Activated naive CD4-positive, alpha-beta T cell treated with anti-CD3 and anti-CD28 coated beads for 36 hours (primary cell): ENCODE measurements at regions of chr17 and their contacts with region 1.

Region 1: GRCh38 chr17:69607162-69607834 is 192.8 kb downstream of the MAP2K6 start:
- DNase-seq: peak; percentile 78
- H3K4me3 Mint-ChIP-seq: no peak overlapping the region
- H3K27ac Mint-ChIP-seq: peak overlapping the region; percentile 73
- H3K4me1 Mint-ChIP-seq: peaks cover 14% of the 10 kb centered on the region
- H3K27me3 Mint-ChIP-seq: peaks cover 7% of the 10 kb centered on the region

Region 2: GRCh38 chr17:69574257-69575197 is 32.8 kb before region 1 on chr17:
- CTCF ChIA-PET with region 1: no interaction called
- intact Hi-C with region 1: loop called (anchors 2 kb)
- DNase-seq: no peak
- H3K4me3 Mint-ChIP-seq: no peak overlapping the region
- H3K27ac Mint-ChIP-seq: no peak overlapping the region
- H3K4me1 Mint-ChIP-seq: no peaks in the 10 kb centered on the region
- H3K27me3 Mint-ChIP-seq: peaks cover 5% of the 10 kb centered on the region

Region 3: DNA sequence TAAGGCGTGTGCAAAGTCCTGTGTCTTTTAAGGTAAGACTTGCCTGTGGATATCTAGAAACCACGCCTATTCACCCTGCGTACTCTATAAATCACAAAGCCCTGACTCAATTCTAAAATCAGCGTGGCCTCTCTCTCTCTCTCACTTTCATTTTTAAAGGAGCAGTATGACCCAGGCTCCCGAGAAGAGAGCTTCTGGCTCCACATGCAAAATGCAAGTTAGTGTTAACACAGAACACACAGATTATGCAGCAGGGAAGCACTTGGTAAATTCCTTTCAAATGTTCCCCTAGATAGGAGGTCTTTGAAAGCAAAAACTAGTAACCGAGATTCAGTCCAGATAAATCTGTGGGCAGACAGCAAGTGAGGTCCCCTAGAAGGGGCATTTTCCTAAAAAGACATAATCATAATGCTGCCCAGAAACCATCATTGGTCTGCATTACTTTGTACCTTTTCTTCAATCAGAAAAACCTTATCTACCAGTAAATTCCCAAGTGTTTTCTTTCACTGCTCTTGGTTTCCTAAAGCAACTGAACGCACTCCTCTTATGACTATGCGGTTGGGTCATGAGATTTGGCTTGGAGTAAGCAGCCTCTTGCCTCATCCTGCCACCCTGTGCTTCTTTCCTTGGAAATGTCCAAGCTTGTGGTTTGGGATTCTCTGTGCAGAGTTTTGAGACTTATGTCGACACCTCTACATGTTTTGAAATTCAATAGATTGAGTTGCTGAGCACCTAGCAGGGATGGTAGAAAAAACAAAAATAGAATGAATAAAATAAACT is 530.3 kb after region 1 on chr17:
- CTCF ChIA-PET with region 1: no interaction called
- intact Hi-C with region 1: loop called (anchors 2 kb)
- DNase-seq: peak; percentile 59
- H3K4me3 Mint-ChIP-seq: no peak overlapping the region
- H3K27ac Mint-ChIP-seq: no peak overlapping the region
- H3K4me1 Mint-ChIP-seq: peaks cover 18% of the 10 kb centered on the region
- H3K27me3 Mint-ChIP-seq: no peaks in the 10 kb centered on the region

Region 4: DNA sequence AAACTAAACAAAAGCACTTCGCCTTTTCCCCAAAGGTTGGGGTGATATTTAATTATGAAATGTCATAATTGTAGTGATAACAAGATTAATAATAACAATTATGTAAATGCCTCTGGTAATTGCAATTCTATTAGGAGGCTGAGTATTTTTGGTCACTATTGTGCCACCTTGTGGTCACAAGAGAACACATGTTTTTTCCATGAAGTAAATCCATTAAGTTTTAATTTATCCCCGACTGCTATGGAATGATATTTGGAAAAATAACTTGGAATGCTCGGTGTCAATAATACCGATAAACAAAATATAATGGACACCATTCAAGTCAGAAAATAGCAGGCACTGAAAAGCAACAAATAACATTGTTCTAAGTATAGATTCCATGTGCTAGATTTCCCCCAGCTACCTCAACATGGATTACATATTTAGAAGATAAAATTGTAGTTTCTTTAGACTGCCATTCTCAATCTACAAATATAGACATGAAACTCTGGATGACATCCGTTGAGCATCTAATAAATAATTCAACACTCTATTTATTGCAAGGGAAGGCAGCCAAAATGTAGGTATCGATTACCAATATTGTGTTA is 537.1 kb after region 1 on chr17:
- CTCF ChIA-PET with region 1: interaction called, 3 read pairs
- intact Hi-C with region 1: loop called (anchors 1 kb)
- DNase-seq: no peak
- H3K4me3 Mint-ChIP-seq: no peak overlapping the region
- H3K27ac Mint-ChIP-seq: no peak overlapping the region
- H3K4me1 Mint-ChIP-seq: no peaks in the 10 kb centered on the region
- H3K27me3 Mint-ChIP-seq: peaks cover 2% of the 10 kb centered on the region

Region 5: DNA sequence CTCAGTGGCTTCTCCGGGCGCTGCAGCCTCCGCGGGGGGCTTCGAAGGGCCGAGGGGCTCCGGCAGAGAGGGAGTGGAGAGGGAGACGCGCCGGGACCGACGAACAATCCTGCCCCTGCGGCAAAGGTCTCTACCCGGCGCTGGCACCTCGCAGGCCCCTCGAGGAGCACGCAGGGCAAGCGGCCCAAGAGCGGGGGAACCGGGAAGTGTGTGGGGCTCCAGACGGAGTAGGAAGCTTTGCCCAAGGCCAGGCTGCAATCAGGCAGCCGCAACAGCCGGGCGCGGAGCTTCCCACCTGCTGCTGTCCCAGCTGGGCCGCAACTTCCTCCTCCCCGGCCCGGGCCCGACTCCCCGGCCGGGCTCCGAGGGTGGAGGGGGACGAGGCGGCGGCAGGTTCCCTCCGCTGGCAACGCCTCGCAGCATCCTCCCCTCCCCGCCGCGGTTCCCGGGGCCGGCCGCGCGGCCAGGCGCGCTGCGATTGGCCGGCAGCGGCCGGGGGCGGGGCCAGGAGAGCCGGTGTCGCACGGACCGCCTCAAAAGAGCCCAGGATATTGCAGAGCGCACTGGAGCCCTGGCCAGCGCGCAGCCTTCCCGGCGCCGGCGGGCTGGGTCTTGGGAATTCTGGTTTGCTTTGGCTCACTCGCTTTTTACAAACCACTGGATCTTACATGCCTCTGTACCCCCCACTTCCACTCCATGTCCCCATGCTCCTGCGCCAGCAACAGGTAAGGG is 561.8 kb after region 1 on chr17 and contains the start of gene KCNJ2:
- CTCF ChIA-PET with region 1: no interaction called
- intact Hi-C with region 1: loop called (anchors 1 kb)
- DNase-seq: peak; percentile 56
- H3K4me3 Mint-ChIP-seq: peak within 1 kb of the TSS; percentile 70
- H3K27ac Mint-ChIP-seq: no peak within 1 kb of the TSS
- H3K4me1 Mint-ChIP-seq: peaks cover 15% of the 10 kb centered on the region
- H3K27me3 Mint-ChIP-seq: peaks cover 62% of the 10 kb centered on the region
- total RNA-seq, gene KCNJ2: not detected

Region 6: DNA sequence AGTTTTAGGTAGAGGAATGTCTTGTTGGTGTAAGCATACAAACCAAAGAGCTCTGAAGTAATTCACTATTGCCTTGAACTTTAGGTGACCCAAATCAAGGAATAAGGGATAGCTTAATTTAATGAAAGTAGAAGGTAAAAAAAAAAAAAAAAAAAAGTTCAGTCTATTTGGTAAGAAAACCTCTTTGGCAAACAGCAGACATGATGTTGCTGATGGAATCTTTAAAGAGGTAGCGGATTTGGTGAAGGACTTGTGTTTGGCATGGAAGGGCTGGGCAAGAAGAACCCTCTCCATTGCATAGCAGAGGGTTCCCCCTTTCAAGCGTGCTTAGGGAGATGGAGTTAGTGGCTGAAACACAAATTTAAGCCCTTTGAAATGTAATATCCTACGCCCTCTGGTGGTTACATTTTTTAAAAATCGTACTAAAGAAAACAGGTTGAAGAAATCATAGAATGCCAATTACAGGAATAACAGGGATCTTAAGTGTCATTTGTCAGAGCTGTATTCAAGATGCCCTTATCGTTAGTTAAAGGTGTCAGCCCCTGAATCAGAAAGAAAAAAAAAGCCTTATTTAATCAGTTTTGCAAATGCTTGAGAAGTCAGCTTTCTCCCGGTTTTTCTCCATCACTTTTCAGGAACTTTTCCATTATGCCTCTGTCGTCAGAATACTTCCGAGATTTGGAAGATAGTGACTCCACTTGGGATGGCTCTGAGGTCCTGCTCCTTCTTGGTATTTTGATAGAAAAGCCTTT is 945.1 kb after region 1 on chr17:
- CTCF ChIA-PET with region 1: interaction called, 4 read pairs
- intact Hi-C with region 1: loop called (anchors 5 kb)
- DNase-seq: no peak
- H3K4me3 Mint-ChIP-seq: no peak overlapping the region
- H3K27ac Mint-ChIP-seq: no peak overlapping the region
- H3K4me1 Mint-ChIP-seq: no peaks in the 10 kb centered on the region
- H3K27me3 Mint-ChIP-seq: no peaks in the 10 kb centered on the region

Region 7: GRCh38 chr17:70629902-70630301 is 1022.6 kb after region 1 on chr17:
- CTCF ChIA-PET with region 1: no interaction called
- intact Hi-C with region 1: loop called (anchors 5 kb)
- DNase-seq: peak; percentile 25
- H3K4me3 Mint-ChIP-seq: no peak overlapping the region
- H3K27ac Mint-ChIP-seq: no peak overlapping the region
- H3K4me1 Mint-ChIP-seq: no peaks in the 10 kb centered on the region
- H3K27me3 Mint-ChIP-seq: no peaks in the 10 kb centered on the region